Posterior cingulate gyrus (tissue), 11 donors: ENCODE measurements at regions of chr11 and their contacts with region 1.

Region 1: GRCh38 chr11:12043959-12044819 is 35.8 kb upstream of the DKK3 start:
- DNase-seq: peak; percentile 59 to 96 (median 80)

Region 2: DNA sequence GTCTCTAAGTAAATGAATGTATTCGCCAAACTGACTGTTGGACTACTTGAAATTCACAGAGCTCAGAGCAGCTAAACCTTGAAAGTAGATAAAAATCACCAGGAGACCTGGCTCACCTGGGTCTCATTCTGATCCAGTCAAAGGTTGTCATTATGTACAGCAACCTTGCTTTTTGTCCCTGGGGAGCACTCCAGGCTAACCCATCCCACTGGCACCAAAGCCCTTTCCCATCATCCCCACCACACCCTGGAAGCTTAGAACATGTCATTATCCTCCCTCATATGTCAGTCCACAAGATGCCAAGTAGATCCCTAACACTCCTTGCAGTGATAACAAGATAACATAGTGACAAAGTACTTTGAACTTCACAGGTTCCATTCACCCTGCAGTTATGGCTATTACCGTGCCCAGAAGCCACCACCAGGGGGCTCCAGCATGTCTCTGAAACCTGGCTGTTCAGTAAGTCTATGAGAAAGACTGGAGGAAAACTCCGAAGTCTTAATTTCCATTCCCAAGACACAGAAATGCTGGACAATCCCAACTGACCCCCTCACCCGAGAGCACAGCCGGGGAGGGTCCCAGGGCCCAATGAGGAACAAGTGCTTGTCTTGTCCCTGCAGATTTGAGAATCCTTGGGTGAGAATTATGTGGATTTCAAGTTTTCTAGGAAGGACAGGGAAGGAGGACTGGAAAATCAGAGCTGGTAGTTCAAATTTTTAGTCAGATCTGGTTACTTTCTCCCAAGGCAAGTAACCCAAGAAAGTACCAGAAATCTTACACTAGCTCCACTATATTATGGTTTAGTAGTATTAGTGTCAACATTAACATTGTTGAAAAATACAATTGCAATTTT is 245.4 kb before region 1 on chr11:
- intact Hi-C with region 1: loop called (anchors 2 kb)
- DNase-seq: peak in 9 of 10 donors; percentile 39 to 97 (median 91)

Region 3: DNA sequence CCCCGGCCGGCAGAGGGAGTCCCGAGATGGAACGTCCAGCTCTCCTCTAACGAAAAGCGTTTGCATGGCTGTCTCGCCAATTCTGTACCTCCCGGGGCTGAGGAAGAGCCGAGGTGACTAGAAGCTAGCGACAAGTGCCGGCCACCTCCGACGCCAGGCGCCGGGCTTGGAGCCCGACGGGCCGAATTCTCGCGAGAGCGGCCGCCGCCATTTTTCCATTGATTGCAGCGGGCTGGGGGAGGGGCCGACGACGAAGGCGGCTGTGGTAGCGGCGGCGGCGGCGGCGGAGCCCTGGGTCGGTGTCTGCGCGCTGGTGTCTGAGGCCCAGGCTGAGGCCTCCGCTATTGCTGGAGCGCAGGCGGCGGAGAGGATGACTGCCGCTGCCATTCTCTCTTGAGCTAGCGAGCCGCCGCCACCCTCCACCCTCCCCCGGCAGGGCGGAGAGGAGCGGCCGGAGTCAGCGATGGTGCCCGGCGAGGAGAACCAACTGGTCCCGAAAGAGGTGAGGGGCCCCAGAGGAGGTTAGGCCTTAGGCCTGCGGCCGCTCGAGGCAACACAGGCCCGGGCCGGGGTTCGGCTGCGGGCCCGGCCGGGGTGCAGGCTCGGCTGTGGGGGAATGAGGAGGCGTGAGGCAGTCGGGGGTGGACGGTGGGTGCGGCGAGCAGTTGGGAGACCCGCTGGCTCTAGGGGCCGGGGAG is 202.3 kb before region 1 on chr11 and contains the start of gene USP47:
- intact Hi-C with region 1: loop called (anchors 5 kb)
- DNase-seq: peak; percentile 78 to 97 (median 87)

Region 4: GRCh38 chr11:11931461-11932055 is 112.6 kb before region 1 on chr11:
- intact Hi-C with region 1: loop called (anchors 1 kb)
- DNase-seq: no peak

Region 5: DNA sequence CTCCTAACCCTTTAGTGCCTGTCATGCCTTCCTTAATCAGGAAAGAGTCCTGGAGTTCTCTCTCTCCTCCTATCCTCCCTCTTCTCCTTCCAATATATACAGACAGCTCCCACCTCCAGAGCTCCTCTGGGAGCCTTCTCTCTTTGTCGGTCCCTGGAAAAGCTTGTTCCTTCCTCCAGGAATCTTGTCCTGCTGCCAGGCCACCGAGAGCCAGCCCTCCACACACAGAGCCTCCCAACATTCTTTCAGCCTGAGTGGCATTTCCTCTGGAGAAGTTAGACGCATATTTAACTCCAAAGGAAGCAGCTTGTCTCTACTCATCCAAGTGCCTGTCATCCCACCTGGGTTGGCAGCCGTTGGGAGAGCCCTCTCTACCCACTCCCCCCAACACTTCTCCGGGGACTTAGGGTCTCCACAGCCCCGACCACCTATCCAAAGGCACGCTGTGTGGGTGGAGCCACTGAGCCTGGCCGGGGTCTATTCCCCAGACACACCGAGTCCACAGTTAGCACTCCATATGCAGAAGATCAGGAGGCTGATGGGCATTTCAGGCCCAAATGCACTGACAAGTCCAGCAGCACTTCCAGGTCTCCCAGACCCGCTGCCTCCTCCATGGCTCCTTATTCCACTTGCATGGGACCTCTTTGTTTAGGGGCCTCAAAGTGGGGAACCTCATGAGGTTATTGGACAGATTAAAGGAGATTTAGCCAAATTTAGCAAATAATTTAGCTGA is 66.8 kb before region 1 on chr11:
- intact Hi-C with region 1: loop called (anchors 10 kb)
- DNase-seq: peak in 3 of 10 donors; percentile 61 to 89 (median 86)

Region 6: GRCh38 chr11:12149672-12150225 is 105.6 kb after region 1 on chr11:
- intact Hi-C with region 1: no loop called
- DNase-seq: peak in 1 of 10 donors; percentile 48

Region 7: DNA sequence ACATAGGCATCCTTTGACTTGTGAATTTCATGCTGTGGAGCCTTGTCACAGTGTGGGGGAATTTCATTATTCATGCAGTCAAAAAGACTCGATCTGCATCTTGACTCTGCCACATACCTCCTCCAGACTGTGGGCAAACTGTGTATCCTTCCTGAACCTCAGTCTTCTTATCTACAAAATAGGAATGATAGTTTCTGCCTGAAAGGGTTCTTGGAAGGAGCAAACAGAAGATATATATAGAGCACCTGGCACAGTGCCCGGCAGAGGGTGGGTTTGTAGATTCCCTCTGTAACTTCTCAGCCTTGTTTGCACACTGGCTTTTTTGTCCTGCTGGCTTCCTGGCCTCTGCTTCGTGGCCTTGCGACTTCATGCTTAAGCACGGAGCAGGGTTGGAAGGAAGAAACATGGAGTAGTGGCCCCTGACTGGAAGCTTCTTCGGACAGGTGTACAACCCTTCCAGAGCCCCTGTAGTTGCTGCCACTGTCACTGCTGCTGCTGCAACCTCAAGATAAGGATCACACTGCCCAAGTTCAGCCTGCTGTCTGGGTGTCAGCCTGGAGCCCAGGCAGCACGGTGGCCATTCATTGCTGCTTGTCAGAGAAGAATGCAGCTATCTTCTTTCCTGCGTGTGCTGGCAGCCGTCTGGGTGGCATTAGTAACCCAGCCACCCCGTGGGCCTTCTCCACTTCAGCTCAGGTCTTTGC is 172.6 kb after region 1 on chr11:
- intact Hi-C with region 1: no loop called
- DNase-seq: no peak

Region 8: DNA sequence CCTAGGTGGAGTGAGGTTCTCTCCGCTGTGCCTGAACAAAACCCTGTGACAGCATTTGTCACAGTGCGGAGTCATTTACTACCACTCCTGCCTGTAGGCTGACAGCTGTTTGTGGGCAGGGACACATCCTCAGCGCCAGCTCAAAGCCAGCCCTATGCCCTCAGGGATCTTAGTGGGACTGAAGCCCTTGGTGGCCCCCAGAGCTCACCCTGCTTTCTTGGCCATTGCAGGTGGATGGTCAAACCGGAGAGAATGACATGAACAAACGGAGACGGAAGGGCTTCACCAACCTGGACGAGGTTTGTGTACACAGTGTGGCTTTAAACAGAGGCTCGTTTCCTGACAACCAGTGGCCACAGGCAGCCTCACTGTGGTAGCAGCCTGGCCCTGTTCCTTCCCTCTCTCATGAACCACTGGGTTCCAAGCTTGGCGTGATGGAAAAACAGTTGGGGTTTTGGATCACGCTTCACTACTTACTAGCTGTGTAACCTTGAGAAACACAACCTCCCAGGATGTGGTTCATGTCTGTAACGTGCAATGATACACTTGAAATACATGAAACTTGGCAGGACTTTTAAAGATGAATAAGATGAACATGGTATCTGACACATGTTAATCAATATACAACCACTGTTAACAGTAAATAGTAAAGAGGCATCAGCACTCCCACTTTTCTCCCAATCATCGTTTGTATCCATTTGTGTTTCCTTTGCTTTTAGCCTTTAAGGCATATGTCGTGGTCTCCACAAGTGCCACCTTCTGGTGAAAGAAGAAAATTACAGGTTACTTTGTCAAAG is 192.0 kb after region 1 on chr11:
- intact Hi-C with region 1: loop called (anchors 1 kb)
- DNase-seq: peak in 1 of 10 donors; percentile 78

Region 9: GRCh38 chr11:12281571-12282478 is 237.6 kb after region 1 on chr11:
- intact Hi-C with region 1: loop called (anchors 1 kb)
- DNase-seq: peak; percentile 83 to 98 (median 92)